GM23248 (cell line): ENCODE measurements at regions of chr13 and their contacts with region 1.

Region 1: GRCh38 chr13:110233181-110233950 is 73.6 kb downstream of the COL4A1 start:
- DNase-seq: peak; percentile 92
- H3K4me3 ChIP-seq: peak overlapping the region; percentile 68
- H3K27ac ChIP-seq: peak overlapping the region; percentile 63
- H3K4me1 ChIP-seq: peaks cover 15% of the 10 kb centered on the region
- H3K27me3 ChIP-seq: no peaks in the 10 kb centered on the region

Region 2: GRCh38 chr13:108807841-108808240 is 1425.5 kb before region 1 on chr13:
- in situ Hi-C with region 1: no loop called
- DNase-seq: no peak
- H3K4me3 ChIP-seq: no peak overlapping the region
- H3K27ac ChIP-seq: no peak overlapping the region
- H3K4me1 ChIP-seq: no peaks in the 10 kb centered on the region
- H3K27me3 ChIP-seq: no peaks in the 10 kb centered on the region

Region 3: GRCh38 chr13:110412132-110412914 is 179.0 kb after region 1 on chr13:
- in situ Hi-C with region 1: loop called (anchors 10 kb)
- DNase-seq: peak; percentile 99
- H3K4me3 ChIP-seq: no peak overlapping the region
- H3K27ac ChIP-seq: peak overlapping the region; percentile 73
- H3K4me1 ChIP-seq: peaks cover 32% of the 10 kb centered on the region
- H3K27me3 ChIP-seq: no peaks in the 10 kb centered on the region

Region 4: DNA sequence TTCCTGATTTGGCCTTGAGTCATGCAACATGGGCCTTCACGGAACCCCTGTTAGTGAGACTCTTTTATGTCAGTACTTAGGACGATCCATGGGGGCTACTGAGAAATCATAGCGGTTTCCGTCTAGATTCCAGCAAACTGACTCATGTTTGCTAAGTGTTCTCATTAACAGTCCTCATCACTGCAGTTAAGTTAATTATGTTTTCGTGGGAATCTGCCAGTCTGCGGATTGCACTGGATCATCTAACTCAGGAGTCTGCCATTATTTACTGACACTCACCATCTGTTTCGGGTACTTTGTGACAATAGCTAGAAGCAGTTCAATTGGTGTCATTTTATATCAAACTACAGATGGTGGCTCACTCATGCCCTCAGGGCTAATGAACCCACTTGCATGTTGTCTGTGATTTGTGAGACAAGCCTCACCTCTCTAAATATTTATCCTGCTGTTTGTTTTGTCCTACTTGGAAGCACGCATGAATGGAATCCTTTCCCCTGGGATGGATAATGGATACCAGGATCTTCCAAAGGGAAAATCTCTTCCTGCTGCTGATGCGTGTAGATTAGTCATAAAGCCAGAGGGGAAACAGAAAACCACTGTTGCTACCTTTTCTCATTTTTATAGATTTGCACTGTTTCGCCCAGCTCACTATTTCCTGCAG is 266.4 kb after region 1 on chr13:
- in situ Hi-C with region 1: no loop called
- DNase-seq: no peak
- H3K4me3 ChIP-seq: no peak overlapping the region
- H3K27ac ChIP-seq: no peak overlapping the region
- H3K4me1 ChIP-seq: no peaks in the 10 kb centered on the region
- H3K27me3 ChIP-seq: no peaks in the 10 kb centered on the region